PC-9 (cell line): ENCODE measurements at regions of chr4 and their contacts with region 1.

Region 1: DNA sequence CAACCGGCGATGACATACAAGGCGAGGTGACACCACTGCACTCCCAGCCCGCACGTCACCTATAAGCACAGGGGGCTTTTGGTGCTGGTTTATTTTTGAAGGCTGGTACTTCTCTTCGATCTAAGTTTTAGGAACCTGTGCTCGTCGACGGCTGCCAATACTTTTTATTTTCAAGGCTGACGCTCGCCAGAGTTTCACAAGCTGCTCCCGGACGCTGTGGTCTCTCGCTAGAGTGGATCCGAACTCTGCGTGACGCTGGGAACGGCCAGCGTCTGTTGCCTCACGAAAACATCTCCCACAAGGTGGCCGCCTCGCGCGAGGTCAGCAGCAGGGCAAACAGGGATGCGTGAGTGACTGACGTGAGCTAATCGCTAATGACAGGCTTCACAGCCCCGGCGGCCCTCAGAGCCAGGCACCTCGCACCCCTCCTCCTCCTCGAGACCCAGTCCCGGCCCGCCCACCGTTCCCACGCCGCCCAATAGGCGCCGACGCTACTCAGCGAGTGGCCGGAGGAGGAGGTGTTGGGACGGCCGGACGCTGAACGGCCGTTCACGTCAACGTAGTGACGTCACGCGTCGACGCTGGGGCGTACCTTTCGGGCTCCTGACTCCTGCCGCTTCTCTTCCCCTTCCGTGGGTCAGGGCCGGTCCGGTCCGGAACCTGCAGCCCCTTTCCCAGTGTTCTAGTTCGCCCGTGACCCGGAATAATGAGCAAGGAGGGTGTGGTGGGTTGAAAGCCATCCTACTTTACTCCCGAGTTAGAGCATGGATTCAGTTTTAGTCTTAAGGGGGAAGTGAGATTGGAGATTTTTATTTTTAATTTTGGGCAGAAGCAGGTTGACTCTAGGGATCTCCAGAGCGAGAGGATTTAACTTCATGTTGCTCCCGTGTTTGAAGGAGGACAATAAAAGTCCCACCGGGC is at the start of gene CLCN3:
- DNase-seq: peak; percentile 87 to 94
- H3K4me3 ChIP-seq: peak within 1 kb of the TSS; percentile 72
- H3K27ac ChIP-seq: peak within 1 kb of the TSS; percentile 85
- H3K4me1 ChIP-seq: peaks cover 18% of the 10 kb centered on the region
- H3K27me3 ChIP-seq: no peaks in the 10 kb centered on the region
- CTCF ChIP-seq: no peak
- total RNA-seq, gene CLCN3: 38.8 and 51.6 TPM in 2 replicates

Region 2: DNA sequence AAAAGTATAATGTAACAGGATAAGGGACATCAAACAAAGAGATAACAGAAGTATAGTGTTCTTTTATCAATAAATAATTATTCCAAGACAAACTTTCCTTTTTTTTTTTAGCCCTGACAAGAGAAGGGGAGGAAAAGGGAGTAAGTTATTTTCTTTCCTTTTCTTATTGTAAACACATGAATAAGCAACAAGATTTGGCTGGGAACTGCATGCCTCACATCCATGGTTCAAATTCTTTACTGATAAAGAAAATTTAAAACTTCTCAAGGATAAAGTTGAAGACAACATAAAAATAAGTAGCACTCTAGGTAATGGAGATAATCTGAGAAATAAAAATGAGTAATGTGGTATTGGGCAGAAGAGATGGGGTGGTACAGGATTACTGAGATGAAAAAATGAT is 79.4 kb before region 1 on chr4:
- CTCF ChIA-PET with region 1: interaction called, 14 read pairs
- POLR2A ChIA-PET with region 1: no interaction called
- intact Hi-C with region 1: no loop called
- DNase-seq: no peak
- H3K4me3 ChIP-seq: no peak overlapping the region
- H3K27ac ChIP-seq: no peak overlapping the region
- H3K4me1 ChIP-seq: no peaks in the 10 kb centered on the region
- H3K27me3 ChIP-seq: no peaks in the 10 kb centered on the region
- CTCF ChIP-seq: no peak

Region 3: GRCh38 chr4:169593050-169593560 is 27.1 kb before region 1 on chr4:
- CTCF ChIA-PET with region 1: no interaction called
- POLR2A ChIA-PET with region 1: no interaction called
- intact Hi-C with region 1: no loop called
- DNase-seq: no peak
- H3K4me3 ChIP-seq: no peak overlapping the region
- H3K27ac ChIP-seq: no peak overlapping the region
- H3K4me1 ChIP-seq: no peaks in the 10 kb centered on the region
- H3K27me3 ChIP-seq: no peaks in the 10 kb centered on the region
- CTCF ChIP-seq: no peak

Region 4: GRCh38 chr4:169659716-169660670 is 39.8 kb after region 1 on chr4:
- CTCF ChIA-PET with region 1: no interaction called
- POLR2A ChIA-PET with region 1: no interaction called
- intact Hi-C with region 1: loop called (anchors 1 kb)
- DNase-seq: peak; percentile 77 to 97
- H3K4me3 ChIP-seq: peak overlapping the region; percentile 68
- H3K27ac ChIP-seq: peak overlapping the region; percentile 98
- H3K4me1 ChIP-seq: peaks cover 47% of the 10 kb centered on the region
- H3K27me3 ChIP-seq: no peaks in the 10 kb centered on the region
- CTCF ChIP-seq: no peak